Dorsolateral prefrontal cortex (tissue), 120 donors: ENCODE measurements at regions of chr22 and their contacts with region 1.

Region 1: DNA sequence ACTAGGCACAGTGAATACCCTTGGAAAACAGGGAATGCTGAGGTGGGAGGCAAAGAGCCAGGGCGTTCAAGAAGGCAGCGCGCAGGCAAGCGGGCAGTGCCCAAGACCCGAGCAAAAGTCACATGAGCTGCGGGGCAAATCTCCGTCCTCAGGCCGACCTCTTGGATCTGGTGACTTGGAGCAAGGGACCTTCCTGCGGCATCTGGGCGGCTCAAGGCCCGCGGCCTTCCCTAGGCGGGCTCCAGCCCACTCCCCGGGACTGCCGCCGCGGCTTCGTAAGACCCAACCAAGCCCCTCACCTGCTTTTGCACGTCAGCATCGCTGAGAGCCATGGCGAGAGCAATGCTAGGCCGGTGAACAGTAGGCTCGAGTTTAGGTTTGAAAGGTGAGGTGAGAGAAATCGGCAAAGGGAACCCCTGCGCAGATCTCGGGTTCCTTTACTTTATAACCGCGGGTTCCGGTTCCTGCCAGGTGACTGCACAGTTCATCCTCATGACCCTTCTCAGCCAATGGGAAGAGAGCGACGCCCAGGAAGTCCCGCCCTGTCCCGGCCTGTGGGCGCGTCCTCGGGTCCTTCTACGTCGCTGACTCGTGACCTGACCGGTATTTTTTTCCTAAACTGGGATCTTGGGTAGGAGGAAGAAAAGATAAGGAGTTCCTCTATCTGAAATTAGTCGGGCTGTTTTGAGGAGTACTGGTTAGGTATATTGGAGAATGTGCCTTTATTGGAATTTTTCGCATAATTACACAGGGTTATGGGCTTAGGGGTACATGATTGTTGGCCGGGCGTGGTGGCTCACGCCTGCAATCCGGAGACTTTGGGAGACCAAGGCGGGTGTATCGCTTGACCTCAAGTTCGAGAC is at the start of gene ATP6V1E1:
- DNase-seq: peak; percentile 94 to 99 (median 97)
- H3K4me3 ChIP-seq: peak within 1 kb of the TSS; percentile 68 to 100 (median 99)
- H3K27ac ChIP-seq: peak within 1 kb of the TSS; percentile 55 to 98 (median 92)
- H3K27me3 ChIP-seq: no peaks in the 10 kb centered on the region
- CTCF ChIP-seq: peak in 9 of 56 donors; percentile 7 to 31 (median 14)
- total RNA-seq, gene ATP6V1E1: 113 to 439 (median 333) TPM

Region 2: DNA sequence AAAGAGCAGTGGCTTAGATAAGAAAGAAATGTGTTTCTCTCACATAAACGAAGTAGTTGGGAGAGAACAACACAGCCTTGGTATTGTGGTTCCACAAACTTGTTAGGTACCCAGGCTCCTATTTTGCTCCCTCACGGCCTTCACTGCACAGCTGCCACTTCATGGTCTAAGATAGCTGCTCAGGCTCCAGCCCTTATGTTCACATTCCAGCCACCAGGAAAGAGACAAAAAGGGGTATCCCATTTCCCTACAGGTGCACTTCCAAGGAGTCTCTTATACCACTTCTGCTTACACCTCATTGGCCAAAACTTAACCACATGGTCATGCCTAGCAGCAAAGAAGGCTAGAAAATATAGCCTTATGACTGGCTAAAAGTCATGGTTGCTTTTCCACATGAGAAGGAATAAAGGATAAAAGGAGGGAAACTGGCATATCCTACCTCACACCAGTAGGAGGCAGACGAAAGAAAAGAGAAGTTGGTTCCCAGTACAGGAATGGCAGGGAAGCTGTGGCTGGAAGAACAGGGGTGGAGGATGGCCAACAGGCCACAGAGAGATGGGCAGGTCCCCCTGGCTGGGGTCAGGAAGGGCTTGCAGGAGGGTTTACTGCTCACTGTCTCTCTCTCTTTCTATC is 464.0 kb before region 1 on chr22:
- intact Hi-C with region 1: loop called in 1 of 2 experiments (anchors 10 kb)
- DNase-seq: no peak
- H3K4me3 ChIP-seq: no peak overlapping the region
- H3K27ac ChIP-seq: no peak overlapping the region
- H3K27me3 ChIP-seq: no peaks in the 10 kb centered on the region
- CTCF ChIP-seq: peak in 2 of 56 donors; percentile 14 to 16

Region 3: DNA sequence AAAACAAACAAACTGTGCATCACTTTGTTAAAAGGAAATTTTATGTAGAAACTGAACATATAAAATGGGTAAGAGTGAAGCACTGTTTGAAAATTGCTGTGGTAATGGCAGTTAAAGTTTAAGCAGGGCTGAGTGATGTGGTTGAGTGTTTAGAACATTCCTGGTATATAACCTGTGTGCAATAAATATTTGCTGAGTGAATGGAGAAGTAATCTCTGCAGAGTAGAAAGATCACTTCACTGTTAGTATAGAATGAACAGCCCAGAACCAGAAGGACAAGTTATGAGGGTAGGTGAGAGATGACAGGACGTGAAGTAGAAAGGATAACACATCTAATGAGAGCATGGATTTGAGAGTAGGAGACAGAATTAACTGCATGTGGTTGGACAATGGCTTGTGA is 232.0 kb before region 1 on chr22:
- intact Hi-C with region 1: no loop called
- DNase-seq: no peak
- H3K4me3 ChIP-seq: no peak overlapping the region
- H3K27ac ChIP-seq: no peak overlapping the region
- H3K27me3 ChIP-seq: no peaks in the 10 kb centered on the region
- CTCF ChIP-seq: no peak

Region 4: GRCh38 chr22:17580441-17581031 is 48.0 kb before region 1 on chr22:
- intact Hi-C with region 1: loop called in 1 of 2 experiments (anchors 5 kb)
- DNase-seq: peak in 1 of 10 donors; percentile 43
- H3K4me3 ChIP-seq: no peak overlapping the region
- H3K27ac ChIP-seq: peak overlapping the region in 53 of 59 donors; percentile 11 to 91 (median 76)
- H3K27me3 ChIP-seq: no peaks in the 10 kb centered on the region
- CTCF ChIP-seq: no peak